Right ventricle myocardium superior (tissue), 1 donor: ENCODE measurements at regions of chr15 and their contacts with region 1.

Region 1: GRCh38 chr15:65916664-65917406 is 47.5 kb downstream of the RAB11A start:
- DNase-seq: peak; percentile 72
- ATAC-seq: peak; percentile 92

Region 2: DNA sequence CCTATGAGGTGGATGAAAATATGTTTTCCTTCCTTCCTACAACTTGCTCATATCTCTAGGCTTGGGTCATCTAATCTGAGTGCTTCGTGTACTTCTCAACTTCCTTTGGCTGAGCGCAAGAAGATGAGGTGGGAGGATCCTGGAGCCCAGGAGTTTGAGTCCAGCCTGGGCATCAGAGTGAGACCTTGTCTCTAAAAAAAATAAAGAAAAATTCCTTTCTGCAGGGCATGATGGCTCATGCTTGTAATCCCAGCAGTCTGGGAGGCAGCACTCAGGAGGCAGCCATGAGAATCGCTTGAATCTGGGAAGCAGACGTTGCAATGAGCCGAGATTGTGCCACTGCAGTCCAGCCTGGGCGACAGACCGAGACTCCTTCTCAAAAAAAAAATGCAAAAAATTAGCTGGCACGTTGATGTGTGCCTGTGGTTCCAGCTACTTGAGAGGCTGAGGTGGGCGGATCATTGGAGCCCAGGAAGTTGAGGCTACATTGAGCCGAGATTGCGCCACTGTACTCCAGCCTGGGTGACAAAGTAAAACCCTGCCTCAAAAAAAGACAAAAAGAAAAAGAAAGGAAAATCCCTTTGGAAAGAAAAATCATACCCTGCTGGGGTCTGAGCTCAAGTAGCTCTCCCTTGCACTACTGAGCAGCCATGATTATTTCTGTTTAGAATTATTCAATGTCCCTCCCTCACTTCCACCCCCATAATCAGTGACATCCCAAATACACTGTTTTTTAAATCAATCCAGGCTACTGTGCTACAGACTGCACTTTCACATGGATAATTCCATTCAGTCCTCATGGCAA is 75.5 kb before region 1 on chr15:
- intact Hi-C with region 1: no loop called
- DNase-seq: peak; percentile 52
- ATAC-seq: peak; percentile 59

Region 3: GRCh38 chr15:65869127-65869953 is 47.5 kb before region 1 on chr15 and contains the start of gene RAB11A:
- intact Hi-C with region 1: no loop called
- DNase-seq: peak; percentile 98
- ATAC-seq: peak; percentile 99
- total RNA-seq, gene RAB11A: 142 TPM

Region 4: GRCh38 chr15:66115568-66116206 is 198.9 kb after region 1 on chr15:
- intact Hi-C with region 1: no loop called
- DNase-seq: no peak
- ATAC-seq: no peak

Region 5: DNA sequence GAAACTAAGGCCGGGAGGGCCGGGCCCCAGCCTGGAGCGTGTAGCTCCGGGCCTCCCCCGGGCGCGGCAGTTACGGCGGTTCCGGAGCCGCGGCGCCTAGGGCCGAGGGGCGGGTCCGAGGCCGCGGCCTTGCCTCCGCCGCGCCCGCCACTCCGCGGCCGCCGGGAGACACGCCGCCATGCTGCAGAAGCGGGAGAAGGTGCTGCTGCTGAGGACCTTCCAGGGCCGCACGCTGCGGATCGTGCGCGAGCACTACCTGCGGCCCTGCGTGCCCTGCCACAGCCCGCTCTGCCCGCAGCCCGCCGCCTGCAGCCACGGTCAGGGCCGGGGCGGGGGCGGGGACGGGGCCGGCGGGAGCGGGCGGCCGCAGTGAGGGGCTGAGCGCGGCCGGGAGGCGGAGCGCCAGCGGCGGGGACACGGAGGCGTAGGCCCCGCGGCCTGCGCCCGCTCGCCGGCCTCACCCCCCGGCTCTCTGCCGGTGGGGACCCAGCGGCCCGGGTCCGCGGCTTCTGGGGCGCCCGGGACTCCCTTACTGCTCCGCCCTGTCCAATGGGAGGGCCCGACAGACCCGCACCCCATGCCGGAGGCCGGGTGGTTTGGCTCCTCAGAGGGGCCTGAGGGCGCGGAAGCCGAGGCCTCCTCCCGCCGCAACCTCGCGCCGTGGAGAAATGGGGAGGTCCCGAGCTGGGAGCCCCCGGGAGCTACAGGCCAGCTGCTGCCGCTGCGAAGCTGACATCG is 376.8 kb after region 1 on chr15 and contains the start of gene DIS3L:
- intact Hi-C with region 1: loop called (anchors 5 kb)
- DNase-seq: peak; percentile 82
- ATAC-seq: peak; percentile 94
- total RNA-seq, gene DIS3L: 40.1 TPM